Activated CD4-positive, alpha-beta T cell treated with anti-CD3 and anti-CD28 coated beads, Interleukin-2, amount 10 ng/mL, durations not matched to agents 24 days and 14 days (primary cell): ENCODE measurements at regions of chr20 and their contacts with region 1.

Region 1: DNA sequence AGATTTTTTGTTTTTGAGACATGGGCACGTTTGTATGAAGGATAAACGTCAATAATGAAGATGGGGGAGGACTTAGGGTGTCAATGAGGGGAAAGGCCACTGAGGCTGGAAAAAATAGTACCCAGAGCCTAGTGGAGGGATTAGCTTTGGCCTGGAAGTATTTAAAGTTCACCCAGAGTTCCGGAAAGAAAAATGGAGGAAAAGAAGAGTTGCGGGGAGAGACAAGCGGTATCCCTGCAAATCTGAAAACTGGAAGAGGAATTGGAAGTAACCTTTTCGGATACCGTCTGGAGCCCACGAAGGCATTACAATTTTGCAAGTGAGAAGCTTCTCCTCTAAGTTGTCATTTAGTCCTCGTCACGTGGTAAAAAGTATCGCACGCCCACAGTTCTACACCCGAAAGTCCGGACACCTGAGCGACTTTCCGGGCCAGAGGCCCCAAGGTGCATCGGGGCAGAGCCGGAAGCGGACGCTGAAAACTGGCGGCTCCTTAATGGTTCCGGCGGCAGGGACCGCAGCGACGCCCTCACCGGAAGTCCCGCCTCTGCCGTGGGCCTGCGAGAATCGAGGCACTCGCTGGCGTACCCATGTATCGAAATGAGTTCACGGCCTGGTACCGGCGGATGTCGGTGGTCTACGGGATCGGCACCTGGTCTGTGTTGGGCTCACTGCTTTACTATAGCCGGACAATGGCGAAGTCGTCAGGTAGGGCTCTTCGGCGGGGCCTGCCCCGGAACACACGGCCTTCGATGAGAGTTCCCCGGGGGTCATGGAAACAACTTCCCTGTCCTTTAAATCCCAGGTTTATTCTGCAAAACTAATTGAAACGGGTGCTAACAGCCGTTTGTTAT is at the start of gene SMIM26:
- DNase-seq: peak; percentile 98
- H3K4me3 Mint-ChIP-seq: peak within 1 kb of the TSS; percentile 97
- H3K27ac Mint-ChIP-seq: peak within 1 kb of the TSS; percentile 96
- H3K4me1 Mint-ChIP-seq: peaks cover 14% of the 10 kb centered on the region
- H3K27me3 Mint-ChIP-seq: no peaks in the 10 kb centered on the region
- total RNA-seq, gene SMIM26: 55.8 and 60.2 TPM in 2 replicates

Region 2: GRCh38 chr20:18412221-18412901 is 154.8 kb before region 1 on chr20:
- intact Hi-C with region 1: loop called (anchors 10 kb)
- DNase-seq: no peak
- H3K4me3 Mint-ChIP-seq: no peak overlapping the region
- H3K27ac Mint-ChIP-seq: no peak overlapping the region
- H3K4me1 Mint-ChIP-seq: peaks cover 5% of the 10 kb centered on the region
- H3K27me3 Mint-ChIP-seq: no peaks in the 10 kb centered on the region

Region 3: GRCh38 chr20:18587665-18588573 is 20.8 kb after region 1 on chr20 and contains the start of gene DTD1:
- intact Hi-C with region 1: loop called (anchors 1 kb)
- DNase-seq: peak; percentile 96
- H3K4me3 Mint-ChIP-seq: peak within 1 kb of the TSS; percentile 94
- H3K27ac Mint-ChIP-seq: peak within 1 kb of the TSS; percentile 88
- H3K4me1 Mint-ChIP-seq: peaks cover 25% of the 10 kb centered on the region
- H3K27me3 Mint-ChIP-seq: peaks cover 7% of the 10 kb centered on the region
- total RNA-seq, gene DTD1: 49.2 and 49.9 TPM in 2 replicates

Region 4: DNA sequence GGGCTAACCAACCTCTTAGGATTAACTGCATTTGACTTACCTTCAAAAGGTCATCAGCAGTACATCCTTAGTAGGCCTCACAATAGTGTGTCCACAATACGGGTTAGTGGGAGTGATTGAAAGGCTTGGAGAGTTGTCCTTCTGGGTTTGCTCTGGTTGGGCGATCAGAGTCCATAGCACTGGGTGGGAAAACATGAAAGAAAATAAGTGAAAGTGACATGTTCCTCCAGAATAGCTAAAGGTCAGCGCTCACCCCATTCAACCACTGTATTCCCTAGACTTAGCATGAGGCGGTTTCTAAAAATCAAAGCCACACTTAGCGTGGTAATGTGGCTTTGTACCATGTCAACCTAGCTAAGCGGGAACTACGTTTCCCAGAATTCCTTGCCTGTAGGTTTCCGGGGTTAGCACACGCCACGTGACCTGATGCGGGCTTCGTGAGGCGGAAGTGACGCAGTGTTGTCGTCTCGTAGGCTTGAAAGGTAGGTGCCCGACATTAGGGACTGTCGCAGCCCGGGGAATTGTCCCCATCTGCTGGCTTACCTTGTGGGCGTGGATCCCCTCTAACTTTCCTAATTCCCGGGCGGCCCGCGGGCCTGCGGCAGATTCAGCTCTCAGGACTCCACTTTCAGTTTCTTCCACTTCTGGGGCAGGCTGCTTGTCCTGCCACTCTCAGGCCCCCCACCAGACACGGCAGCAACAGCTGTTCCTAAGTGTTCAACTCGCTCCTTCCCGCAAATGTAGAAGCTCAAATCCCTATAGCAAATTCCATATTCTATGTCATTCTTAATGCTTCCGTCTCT is 226.7 kb after region 1 on chr20:
- intact Hi-C with region 1: loop called (anchors 1 kb)
- DNase-seq: peak; percentile 95
- H3K4me3 Mint-ChIP-seq: peak overlapping the region; percentile 93
- H3K27ac Mint-ChIP-seq: peak overlapping the region; percentile 92
- H3K4me1 Mint-ChIP-seq: peaks cover 6% of the 10 kb centered on the region
- H3K27me3 Mint-ChIP-seq: peaks cover 6% of the 10 kb centered on the region

Region 5: GRCh38 chr20:18904624-18905023 is 337.5 kb after region 1 on chr20:
- intact Hi-C with region 1: no loop called
- DNase-seq: no peak
- H3K4me3 Mint-ChIP-seq: no peak overlapping the region
- H3K27ac Mint-ChIP-seq: no peak overlapping the region
- H3K4me1 Mint-ChIP-seq: no peaks in the 10 kb centered on the region
- H3K27me3 Mint-ChIP-seq: no peaks in the 10 kb centered on the region